Panc1 (cell line): ENCODE measurements at regions of chr6 and their contacts with region 1.

Region 1: DNA sequence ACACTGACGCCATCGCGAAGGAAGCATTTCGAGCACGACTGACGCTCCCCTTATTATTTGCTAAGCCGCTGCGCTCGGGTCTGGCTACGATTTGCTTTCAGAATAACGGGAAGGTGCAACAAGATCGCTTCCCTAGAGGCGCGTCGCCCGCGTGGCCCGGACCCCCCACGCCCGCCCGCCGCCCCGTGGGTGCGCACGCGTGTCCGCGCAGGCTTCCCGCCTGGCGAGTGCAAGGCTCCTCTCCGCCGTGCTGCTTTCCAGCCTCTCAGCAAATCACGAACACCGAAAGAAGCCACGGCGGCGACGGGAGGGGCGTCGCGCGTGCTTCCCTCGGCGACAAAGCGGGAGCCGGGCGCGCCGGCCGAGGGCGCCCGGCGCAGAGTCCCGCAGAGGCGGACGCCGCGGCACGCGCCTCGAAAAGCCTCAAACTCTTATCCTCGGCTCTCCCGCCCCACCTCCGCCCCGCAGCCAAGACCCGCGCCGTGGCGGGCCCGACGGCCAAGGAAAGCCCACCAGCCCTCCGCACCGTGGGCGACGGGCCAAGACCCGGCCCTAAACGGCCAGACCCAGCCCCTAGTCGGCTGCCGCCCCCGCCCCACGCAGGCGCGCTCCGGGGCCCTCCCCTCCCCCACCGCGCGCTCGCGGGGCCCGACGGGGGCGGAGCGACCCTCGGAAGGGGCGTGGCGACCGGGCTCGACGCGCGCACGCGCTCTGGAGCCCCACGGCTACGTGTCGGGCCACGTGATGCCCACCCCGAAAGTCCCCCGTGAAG is 987 bp upstream of the QKI start:
- DNase-seq: no peak
- ATAC-seq: peak; percentile 79
- H3K4me3 ChIP-seq: peak overlapping the region; percentile 71 to 95
- H3K27ac ChIP-seq: peak overlapping the region; percentile 96
- H3K4me1 ChIP-seq: peaks cover 28% of the 10 kb centered on the region
- H3K27me3 ChIP-seq: no peaks in the 10 kb centered on the region
- CTCF ChIP-seq: no peak

Region 2: GRCh38 chr6:161922631-161923119 is 1490.9 kb before region 1 on chr6:
- CTCF ChIA-PET with region 1: no interaction called
- POLR2A ChIA-PET with region 1: no interaction called
- in situ Hi-C with region 1: no loop called
- intact Hi-C with region 1: loop called (anchors 10 kb)
- DNase-seq: peak; percentile 71
- ATAC-seq: peak; percentile 91
- H3K4me3 ChIP-seq: no peak overlapping the region
- H3K27ac ChIP-seq: no peak overlapping the region
- H3K4me1 ChIP-seq: peaks cover 5% of the 10 kb centered on the region
- H3K27me3 ChIP-seq: no peaks in the 10 kb centered on the region
- CTCF ChIP-seq: peak; percentile 72

Region 3: DNA sequence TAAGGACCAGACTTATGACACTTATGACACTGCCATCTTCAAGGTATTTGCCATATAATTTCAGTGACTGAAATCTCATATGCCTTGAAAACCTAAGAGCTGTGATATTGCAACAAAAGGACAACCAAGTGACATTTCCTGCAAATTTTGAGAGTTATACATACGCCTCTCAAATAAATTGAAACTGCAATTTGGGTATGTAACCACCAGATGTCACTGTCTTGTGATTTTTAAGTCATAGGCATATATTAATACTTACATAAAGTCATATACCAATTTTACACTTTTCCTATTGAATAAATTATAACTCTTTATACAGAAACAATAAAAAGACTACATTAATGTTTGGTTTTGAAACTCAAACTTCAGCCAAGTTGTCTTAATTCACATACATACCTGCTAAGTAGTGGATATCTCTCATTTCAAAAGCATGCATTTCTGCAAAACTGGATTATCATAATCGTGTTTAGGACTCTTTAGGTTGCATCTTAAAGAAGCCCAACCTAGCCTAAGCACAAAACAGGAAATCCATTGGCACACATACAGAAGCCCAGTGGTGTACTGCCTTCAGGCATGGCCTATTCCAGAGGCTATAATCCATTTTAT is 505.6 kb before region 1 on chr6:
- CTCF ChIA-PET with region 1: interaction called, 4 read pairs
- POLR2A ChIA-PET with region 1: no interaction called
- in situ Hi-C with region 1: no loop called
- intact Hi-C with region 1: loop called (anchors 2 kb)
- DNase-seq: peak; percentile 30
- ATAC-seq: no peak
- H3K4me3 ChIP-seq: no peak overlapping the region
- H3K27ac ChIP-seq: no peak overlapping the region
- H3K4me1 ChIP-seq: no peaks in the 10 kb centered on the region
- H3K27me3 ChIP-seq: no peaks in the 10 kb centered on the region
- CTCF ChIP-seq: peak; percentile 51; the same call in 1 of the 2 replicates

Region 4: DNA sequence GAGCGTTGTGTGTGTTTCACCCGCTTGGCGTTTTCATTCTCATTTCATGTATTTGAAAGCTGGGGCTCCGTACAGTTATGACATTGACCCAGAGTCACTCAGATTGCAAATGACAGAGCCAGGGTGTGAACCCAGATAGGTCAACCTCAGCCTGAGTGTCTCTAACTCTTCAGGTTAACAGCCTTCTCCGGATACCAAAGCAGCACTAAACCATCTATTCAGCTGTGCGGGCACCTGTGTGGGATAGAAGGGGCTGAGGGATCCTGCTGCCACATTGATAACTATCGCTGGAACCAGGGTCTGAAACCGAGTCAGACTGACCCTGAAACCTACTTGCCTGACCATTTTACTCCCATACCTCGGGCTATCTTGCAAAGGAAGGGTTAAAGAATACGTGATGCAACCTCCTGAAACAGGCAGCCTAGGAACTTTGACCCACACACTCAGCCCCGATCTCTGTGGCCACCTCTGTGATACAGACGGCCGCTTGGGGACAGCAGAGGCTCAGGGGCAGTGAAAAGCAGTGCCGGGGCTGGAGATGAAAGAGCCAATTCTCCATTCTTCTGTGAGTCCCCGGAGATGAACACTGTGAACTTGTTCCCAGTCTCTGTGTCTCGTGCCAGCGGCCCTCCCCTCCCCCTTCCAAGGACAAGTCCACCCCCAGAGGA is 232.5 kb before region 1 on chr6:
- CTCF ChIA-PET with region 1: interaction called, 3 read pairs
- POLR2A ChIA-PET with region 1: interaction called, 8 read pairs
- in situ Hi-C with region 1: no loop called
- intact Hi-C with region 1: loop called (anchors 5 kb)
- DNase-seq: peak; percentile 50
- ATAC-seq: peak; percentile 97
- H3K4me3 ChIP-seq: 0 out of 4 replicates have a peak overlapping the region, but pooled peaks of 1 of the 2 experiments have one; percentile 5
- H3K27ac ChIP-seq: peak overlapping the region; percentile 87; the same call in 1 of the 2 replicates
- H3K4me1 ChIP-seq: peaks cover 11% of the 10 kb centered on the region
- H3K27me3 ChIP-seq: no peaks in the 10 kb centered on the region
- CTCF ChIP-seq: peak; percentile 95

Region 5: DNA sequence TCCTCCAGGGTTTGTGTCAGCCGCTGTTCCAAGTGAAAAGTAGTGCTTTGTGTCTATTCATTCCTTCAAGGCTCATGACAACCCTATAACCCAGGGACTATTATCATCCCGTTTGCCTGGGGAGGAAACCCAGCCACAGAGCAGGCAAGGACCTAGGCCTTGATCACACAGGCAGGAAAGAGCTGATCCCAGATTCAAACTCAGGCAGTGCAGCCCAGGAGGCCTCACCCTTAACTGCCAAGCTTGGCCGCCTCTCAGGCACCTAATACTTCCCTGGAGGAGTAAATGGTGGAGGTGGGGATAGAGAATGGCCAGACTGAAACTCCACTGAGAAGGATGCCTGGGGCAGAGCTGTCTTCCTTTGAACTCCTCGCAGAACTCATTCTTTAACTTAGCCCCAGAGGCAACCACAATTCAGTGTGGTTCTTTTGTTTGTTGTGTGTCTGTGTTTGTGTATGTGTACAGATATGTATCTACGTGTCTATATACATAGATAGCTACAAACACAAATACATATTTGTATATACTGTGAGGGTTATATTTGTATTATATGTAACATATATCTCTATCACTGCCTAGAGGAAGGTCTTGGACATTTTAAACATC is 214.1 kb before region 1 on chr6:
- CTCF ChIA-PET with region 1: no interaction called
- POLR2A ChIA-PET with region 1: no interaction called
- in situ Hi-C with region 1: no loop called
- intact Hi-C with region 1: no loop called
- DNase-seq: no peak
- ATAC-seq: no peak
- H3K4me3 ChIP-seq: no peak overlapping the region
- H3K27ac ChIP-seq: no peak overlapping the region
- H3K4me1 ChIP-seq: no peaks in the 10 kb centered on the region
- H3K27me3 ChIP-seq: no peaks in the 10 kb centered on the region
- CTCF ChIP-seq: no peak

Region 6: DNA sequence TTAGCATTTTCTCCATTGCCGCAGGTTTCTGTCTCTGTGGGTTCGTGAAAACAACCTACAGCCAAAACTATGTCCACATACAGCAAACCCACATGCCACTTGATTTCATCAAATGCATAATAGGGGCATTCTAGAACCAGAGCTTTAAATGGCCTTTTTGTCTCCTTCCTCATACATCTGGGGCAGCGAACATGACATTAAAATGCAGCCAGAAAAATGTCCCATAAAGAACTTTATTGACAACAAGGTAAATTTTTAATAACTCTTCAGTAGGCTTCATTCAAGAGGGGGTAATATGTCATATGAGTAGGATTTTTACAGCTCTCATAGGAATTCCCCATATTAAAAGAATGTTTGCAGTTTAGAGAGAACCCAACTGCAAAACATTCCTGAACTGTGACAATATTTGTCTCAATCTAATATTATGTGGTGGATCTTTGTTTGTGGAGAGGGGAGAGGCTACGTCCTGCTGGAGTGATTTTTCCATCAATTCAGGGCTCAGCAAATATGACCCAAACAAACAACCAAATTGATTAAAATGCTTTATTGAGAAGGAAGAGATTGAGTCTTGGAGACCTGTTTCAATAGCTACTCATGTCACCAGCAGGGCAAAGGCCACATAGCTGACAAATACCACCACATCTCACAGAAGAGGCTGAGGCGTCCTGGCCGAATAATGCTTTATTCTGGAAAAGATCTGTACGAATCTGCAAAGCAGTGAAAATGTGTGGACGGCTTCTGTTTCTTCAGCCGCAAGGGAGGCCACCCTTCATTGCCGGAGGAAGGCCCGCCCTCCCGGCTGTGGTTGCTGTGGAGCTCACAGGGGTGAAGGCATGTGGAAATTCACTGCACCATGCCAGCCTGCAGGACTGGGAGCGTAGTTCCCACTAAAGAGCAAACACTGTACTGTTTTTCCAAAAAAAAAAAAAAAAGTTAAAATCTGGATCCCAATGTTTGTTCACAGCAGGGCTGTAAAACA is 88.8 kb before region 1 on chr6:
- CTCF ChIA-PET with region 1: no interaction called
- POLR2A ChIA-PET with region 1: no interaction called
- in situ Hi-C with region 1: no loop called
- intact Hi-C with region 1: loop called (anchors 2 kb)
- DNase-seq: no peak
- ATAC-seq: peak; percentile 87
- H3K4me3 ChIP-seq: peak overlapping the region in 1 of 2 experiments; percentile 35; a peak in 2 of 4 replicates
- H3K27ac ChIP-seq: peak overlapping the region; percentile 87
- H3K4me1 ChIP-seq: peaks cover 39% of the 10 kb centered on the region
- H3K27me3 ChIP-seq: no peaks in the 10 kb centered on the region
- CTCF ChIP-seq: no peak

Region 7: GRCh38 chr6:163387317-163387716 is 26.2 kb before region 1 on chr6:
- CTCF ChIA-PET with region 1: no interaction called
- POLR2A ChIA-PET with region 1: no interaction called
- in situ Hi-C with region 1: no loop called
- intact Hi-C with region 1: no loop called
- DNase-seq: no peak
- ATAC-seq: no peak
- H3K4me3 ChIP-seq: no peak overlapping the region
- H3K27ac ChIP-seq: no peak overlapping the region
- H3K4me1 ChIP-seq: peaks cover 11% of the 10 kb centered on the region
- H3K27me3 ChIP-seq: no peaks in the 10 kb centered on the region
- CTCF ChIP-seq: no peak

Region 8: GRCh38 chr6:163490826-163491577 is 77.5 kb after region 1 on chr6:
- CTCF ChIA-PET with region 1: no interaction called
- POLR2A ChIA-PET with region 1: no interaction called
- in situ Hi-C with region 1: no loop called
- intact Hi-C with region 1: no loop called
- DNase-seq: no peak
- ATAC-seq: peak; percentile 73; the same call in 1 of the 2 replicates
- H3K4me3 ChIP-seq: no peak overlapping the region
- H3K27ac ChIP-seq: no peak overlapping the region
- H3K4me1 ChIP-seq: peaks cover 35% of the 10 kb centered on the region
- H3K27me3 ChIP-seq: no peaks in the 10 kb centered on the region
- CTCF ChIP-seq: no peak

Region 9: GRCh38 chr6:163554663-163555062 is 141.1 kb after region 1 on chr6:
- CTCF ChIA-PET with region 1: no interaction called
- POLR2A ChIA-PET with region 1: interaction called, 10 read pairs
- in situ Hi-C with region 1: no loop called
- intact Hi-C with region 1: no loop called
- DNase-seq: no peak
- ATAC-seq: peak; percentile 73; the same call in 1 of the 2 replicates
- H3K4me3 ChIP-seq: no peak overlapping the region
- H3K27ac ChIP-seq: no peak overlapping the region
- H3K4me1 ChIP-seq: no peaks in the 10 kb centered on the region
- H3K27me3 ChIP-seq: no peaks in the 10 kb centered on the region
- CTCF ChIP-seq: peak; percentile 75

Region 10: GRCh38 chr6:164927288-164928056 is 1513.9 kb after region 1 on chr6:
- CTCF ChIA-PET with region 1: no interaction called
- POLR2A ChIA-PET with region 1: no interaction called
- in situ Hi-C with region 1: no loop called
- intact Hi-C with region 1: loop called (anchors 5 kb)
- DNase-seq: peak; percentile 36
- ATAC-seq: peak; percentile 95
- H3K4me3 ChIP-seq: no peak overlapping the region
- H3K27ac ChIP-seq: no peak overlapping the region
- H3K4me1 ChIP-seq: no peaks in the 10 kb centered on the region
- H3K27me3 ChIP-seq: no peaks in the 10 kb centered on the region
- CTCF ChIP-seq: peak; percentile 98